PC-9 (cell line): ENCODE measurements at regions of chr3 and their contacts with region 1.

Region 1: GRCh38 chr3:16247276-16248061 is 17.3 kb downstream of the DPH3 start:
- DNase-seq: peak; percentile 57 to 72
- H3K4me3 ChIP-seq: no peak overlapping the region
- H3K27ac ChIP-seq: no peak overlapping the region
- H3K4me1 ChIP-seq: no peaks in the 10 kb centered on the region
- H3K27me3 ChIP-seq: no peaks in the 10 kb centered on the region
- CTCF ChIP-seq: peak; percentile 98

Region 2: GRCh38 chr3:15108082-15108545 is 1139.4 kb before region 1 on chr3:
- CTCF ChIA-PET with region 1: no interaction called
- POLR2A ChIA-PET with region 1: no interaction called
- intact Hi-C with region 1: loop called (anchors 10 kb)
- DNase-seq: peak in 1 of 2 experiments; percentile 62
- H3K4me3 ChIP-seq: no peak overlapping the region
- H3K27ac ChIP-seq: no peak overlapping the region
- H3K4me1 ChIP-seq: no peaks in the 10 kb centered on the region
- H3K27me3 ChIP-seq: peaks cover 11% of the 10 kb centered on the region; the same call in 1 of the 2 replicates
- CTCF ChIP-seq: peak; percentile 94

Region 3: GRCh38 chr3:15601397-15602145 is 645.9 kb before region 1 on chr3 and contains the starts of genes BTD and HACL1:
- CTCF ChIA-PET with region 1: no interaction called
- POLR2A ChIA-PET with region 1: no interaction called
- intact Hi-C with region 1: loop called (anchors 10 kb)
- DNase-seq: peak; percentile 96 to 98
- H3K4me3 ChIP-seq: peak within 1 kb of the TSS; percentile 79
- H3K27ac ChIP-seq: peak within 1 kb of the TSS; percentile 66
- H3K4me1 ChIP-seq: peaks cover 18% of the 10 kb centered on the region
- H3K27me3 ChIP-seq: no peaks in the 10 kb centered on the region
- CTCF ChIP-seq: peak; percentile 33; the same call in 1 of the 2 replicates
- total RNA-seq, gene BTD: 15.6 and 18.1 TPM in 2 replicates
- total RNA-seq, gene HACL1: 28.7 and 31.7 TPM in 2 replicates

Region 4: DNA sequence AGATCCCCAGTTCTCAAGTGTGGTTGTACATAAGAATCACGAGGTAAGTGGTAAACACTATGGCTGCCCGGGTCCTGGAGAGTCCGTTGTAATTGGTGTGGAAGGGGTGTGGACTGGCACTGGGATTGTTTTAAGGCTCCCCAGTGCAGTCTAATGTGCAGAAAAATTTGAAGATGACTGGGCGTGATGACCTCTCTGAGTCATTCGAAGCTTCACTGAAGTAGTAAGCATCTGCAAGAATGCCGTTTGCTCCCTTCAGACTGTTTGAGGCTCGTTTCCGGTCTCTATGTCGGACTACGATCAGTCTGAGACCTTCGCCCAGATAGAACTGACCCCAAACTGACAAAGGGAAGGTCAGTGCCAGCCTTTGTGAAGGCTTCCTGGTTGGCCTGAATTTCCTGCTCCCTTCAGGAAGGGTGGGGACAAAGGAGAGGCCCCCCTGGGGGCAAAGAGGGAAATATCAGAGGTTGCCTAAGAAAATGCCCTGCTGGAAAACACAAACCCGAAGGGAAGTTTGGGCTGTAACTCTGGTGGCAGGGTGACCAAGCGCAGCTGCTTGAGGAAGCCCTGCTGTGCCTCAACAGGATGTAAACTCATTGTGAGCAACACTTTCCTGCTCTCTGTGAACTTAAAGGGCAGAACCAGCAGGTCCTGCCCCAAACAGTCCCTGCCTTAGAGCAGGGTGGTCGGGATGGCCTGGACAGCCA is 611.3 kb before region 1 on chr3:
- CTCF ChIA-PET with region 1: interaction called, 15 read pairs
- POLR2A ChIA-PET with region 1: no interaction called
- intact Hi-C with region 1: loop called (anchors 10 kb)
- DNase-seq: peak; percentile 70 to 93
- H3K4me3 ChIP-seq: peak overlapping the region; percentile 46; the same call in 1 of the 2 replicates
- H3K27ac ChIP-seq: peak overlapping the region; percentile 95
- H3K4me1 ChIP-seq: peaks cover 81% of the 10 kb centered on the region
- H3K27me3 ChIP-seq: no peaks in the 10 kb centered on the region
- CTCF ChIP-seq: no peak

Region 5: GRCh38 chr3:16048435-16049318 is 198.8 kb before region 1 on chr3:
- CTCF ChIA-PET with region 1: interaction called, 4 read pairs
- POLR2A ChIA-PET with region 1: no interaction called
- intact Hi-C with region 1: loop called (anchors 1 kb)
- DNase-seq: peak; percentile 25 to 36
- H3K4me3 ChIP-seq: peak overlapping the region; percentile 30; the same call in 1 of the 2 replicates
- H3K27ac ChIP-seq: no peak overlapping the region
- H3K4me1 ChIP-seq: no peaks in the 10 kb centered on the region
- H3K27me3 ChIP-seq: no peaks in the 10 kb centered on the region
- CTCF ChIP-seq: peak; percentile 93

Region 6: GRCh38 chr3:16203031-16203430 is 44.4 kb before region 1 on chr3:
- CTCF ChIA-PET with region 1: no interaction called
- POLR2A ChIA-PET with region 1: no interaction called
- intact Hi-C with region 1: loop called (anchors 5 kb)
- DNase-seq: peak in 1 of 2 experiments; percentile 41
- H3K4me3 ChIP-seq: no peak overlapping the region
- H3K27ac ChIP-seq: no peak overlapping the region
- H3K4me1 ChIP-seq: no peaks in the 10 kb centered on the region
- H3K27me3 ChIP-seq: no peaks in the 10 kb centered on the region
- CTCF ChIP-seq: no peak

Region 7: GRCh38 chr3:16467393-16467792 is 219.9 kb after region 1 on chr3:
- CTCF ChIA-PET with region 1: no interaction called
- POLR2A ChIA-PET with region 1: no interaction called
- intact Hi-C with region 1: no loop called
- DNase-seq: no peak
- H3K4me3 ChIP-seq: no peak overlapping the region
- H3K27ac ChIP-seq: no peak overlapping the region
- H3K4me1 ChIP-seq: no peaks in the 10 kb centered on the region
- H3K27me3 ChIP-seq: 0 out of 2 replicates have a peak, but pooled peaks cover 4% of the 10 kb centered on the region
- CTCF ChIP-seq: no peak